PC-3 (cell line): ENCODE measurements at regions of chr19 and their contacts with region 1.

Region 1: DNA sequence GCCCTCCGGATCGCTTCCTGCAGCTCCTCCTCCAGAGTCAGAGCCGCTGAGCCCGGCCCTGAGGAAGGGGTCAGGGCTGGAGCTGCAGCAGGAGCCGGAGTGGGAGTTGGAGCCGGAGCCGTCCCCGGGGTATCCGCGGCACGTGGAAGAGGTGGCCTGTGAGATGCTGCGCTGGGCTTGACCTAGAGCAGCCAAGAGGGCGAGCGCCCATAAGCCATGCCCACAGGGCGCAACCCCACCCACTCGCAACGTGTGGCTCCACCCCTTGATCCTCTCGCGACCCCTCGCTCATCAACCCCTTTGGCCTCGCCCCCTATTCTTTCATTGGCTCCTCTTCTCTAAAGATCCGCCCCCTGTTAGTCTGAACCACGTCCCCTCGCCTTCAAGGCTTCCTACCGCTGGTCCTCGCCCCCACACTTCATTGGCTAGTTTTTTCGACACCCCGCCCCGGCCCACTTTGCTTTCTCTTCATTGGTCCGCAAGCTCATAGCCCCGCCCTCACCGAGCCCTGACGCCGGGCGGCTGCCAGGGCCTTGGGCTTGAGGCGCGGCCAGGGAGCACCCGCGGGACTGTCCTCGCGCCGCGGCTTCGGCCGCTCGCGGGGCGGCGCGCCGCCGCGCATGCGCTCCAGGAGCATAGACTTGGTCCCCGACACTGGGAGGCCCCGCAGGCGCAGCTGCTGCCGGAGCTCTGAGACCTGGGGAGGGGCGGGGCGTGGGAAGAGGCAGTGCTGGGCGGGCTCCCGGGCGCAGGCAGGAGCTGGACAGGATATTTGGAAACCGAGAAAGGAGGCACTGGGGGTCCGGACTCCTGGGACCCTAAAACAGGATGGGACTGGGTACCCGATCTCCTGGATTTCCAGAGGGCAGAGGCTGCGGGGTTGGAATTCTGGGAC is 5.4 kb downstream of the MAMSTR start:
- DNase-seq: peak; percentile 97
- ATAC-seq: peak; percentile 89
- H3K4me3 ChIP-seq: peak overlapping the region; percentile 91
- H3K27ac ChIP-seq: no peak overlapping the region
- H3K4me1 ChIP-seq: no peaks in the 10 kb centered on the region; the same call in 1 of the 2 replicates
- H3K27me3 ChIP-seq: no peaks in the 10 kb centered on the region
- CTCF ChIP-seq: no peak

Region 2: DNA sequence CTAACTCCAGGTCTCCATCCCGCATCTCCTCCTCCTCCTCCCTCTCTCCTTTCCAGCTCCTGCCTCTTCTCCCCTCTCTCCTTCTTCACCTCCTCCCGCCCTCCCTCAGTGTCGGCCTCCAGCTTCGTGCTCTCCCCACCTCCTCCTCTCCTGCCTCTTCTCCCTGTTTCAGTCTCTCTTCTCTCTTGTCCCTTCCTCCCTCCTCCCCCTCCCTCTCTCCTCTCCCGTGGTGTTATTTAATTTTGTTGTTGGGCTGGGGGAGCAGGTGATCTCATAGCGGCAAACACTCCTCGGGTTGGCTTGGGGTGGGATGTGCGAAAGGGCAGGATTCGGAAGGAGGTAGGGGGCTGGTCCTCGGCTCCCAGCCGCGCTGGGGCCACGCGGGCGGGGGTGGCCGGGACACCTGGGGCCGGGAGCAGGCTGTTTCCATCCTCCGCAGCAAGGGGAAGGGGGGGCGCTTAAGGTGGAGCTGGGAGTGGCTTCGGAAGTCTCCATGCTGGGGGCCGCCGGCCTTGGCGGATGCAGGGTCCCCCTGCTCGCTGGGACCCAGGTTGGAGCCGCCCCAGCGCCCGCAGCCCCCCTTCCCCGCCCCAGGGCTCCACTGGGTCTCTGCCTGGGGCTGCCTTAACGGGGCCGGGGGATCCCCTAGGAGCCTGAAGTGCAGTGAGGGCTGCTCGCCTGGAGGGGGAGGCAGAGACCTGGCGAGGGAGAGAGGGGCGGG is 68.0 kb before region 1 on chr19 and contains the start of gene CA11:
- CTCF ChIA-PET with region 1: no interaction called
- POLR2A ChIA-PET with region 1: interaction called, 3 read pairs
- intact Hi-C with region 1: loop called (anchors 1 kb)
- DNase-seq: peak; percentile 81
- ATAC-seq: peak; percentile 84
- H3K4me3 ChIP-seq: peak within 1 kb of the TSS; percentile 70
- H3K27ac ChIP-seq: no peak within 1 kb of the TSS
- H3K4me1 ChIP-seq: peaks cover 6% of the 10 kb centered on the region; the same call in 1 of the 2 replicates
- H3K27me3 ChIP-seq: no peaks in the 10 kb centered on the region
- CTCF ChIP-seq: peak; percentile 69
- total RNA-seq, gene CA11: 0.63 and 4.1 TPM in 2 replicates

Region 3: DNA sequence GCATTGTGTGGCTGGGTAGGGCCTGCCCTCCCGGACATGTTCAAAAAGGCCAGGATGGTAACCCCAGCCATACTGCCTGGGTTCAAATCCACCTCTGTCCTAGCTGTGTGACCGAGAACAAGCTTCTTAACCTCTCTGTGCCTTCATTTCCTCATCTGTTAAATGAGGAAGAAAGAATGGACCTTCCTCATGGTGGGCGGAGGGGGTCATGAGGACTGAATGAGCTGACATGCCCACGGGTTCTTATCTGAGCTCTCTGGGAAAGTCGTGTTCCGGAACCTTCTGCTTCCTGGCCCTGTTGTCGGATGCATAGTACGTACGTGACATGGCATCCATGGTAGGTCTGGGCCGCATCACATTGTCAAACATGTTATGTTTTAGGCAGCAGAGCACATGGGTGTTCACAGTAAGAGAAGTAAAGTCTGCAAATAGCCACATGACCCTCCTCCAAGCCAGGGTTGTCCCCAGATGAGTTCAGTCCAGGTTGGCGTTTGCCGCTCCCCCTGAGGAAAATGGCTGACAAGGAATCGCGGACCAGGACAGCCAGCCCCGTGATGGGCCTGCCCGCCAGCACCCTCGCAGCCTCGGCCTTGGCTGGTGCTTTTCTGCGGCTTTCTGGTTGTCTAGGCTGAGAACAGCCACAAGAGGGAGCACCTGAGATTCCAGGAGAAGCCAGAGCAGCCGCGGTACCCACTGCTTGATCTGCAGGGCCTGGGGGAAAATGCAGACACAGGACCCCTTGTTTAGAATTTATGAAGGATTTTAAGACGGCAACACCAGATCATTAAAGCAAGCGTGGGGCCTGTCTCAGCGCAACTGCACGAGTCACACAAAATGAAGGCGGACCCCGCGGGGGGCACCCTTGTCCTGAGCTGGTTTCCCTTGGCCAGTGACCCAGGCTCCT is 38.9 kb before region 1 on chr19:
- CTCF ChIA-PET with region 1: no interaction called
- POLR2A ChIA-PET with region 1: no interaction called
- intact Hi-C with region 1: loop called (anchors 5 kb)
- DNase-seq: peak; percentile 85
- ATAC-seq: peak; percentile 88
- H3K4me3 ChIP-seq: no peak overlapping the region
- H3K27ac ChIP-seq: no peak overlapping the region
- H3K4me1 ChIP-seq: no peaks in the 10 kb centered on the region
- H3K27me3 ChIP-seq: no peaks in the 10 kb centered on the region
- CTCF ChIP-seq: peak; percentile 80